WTC11 (cell line): ENCODE measurements at regions of chr21 and their contacts with region 1.

Region 1: DNA sequence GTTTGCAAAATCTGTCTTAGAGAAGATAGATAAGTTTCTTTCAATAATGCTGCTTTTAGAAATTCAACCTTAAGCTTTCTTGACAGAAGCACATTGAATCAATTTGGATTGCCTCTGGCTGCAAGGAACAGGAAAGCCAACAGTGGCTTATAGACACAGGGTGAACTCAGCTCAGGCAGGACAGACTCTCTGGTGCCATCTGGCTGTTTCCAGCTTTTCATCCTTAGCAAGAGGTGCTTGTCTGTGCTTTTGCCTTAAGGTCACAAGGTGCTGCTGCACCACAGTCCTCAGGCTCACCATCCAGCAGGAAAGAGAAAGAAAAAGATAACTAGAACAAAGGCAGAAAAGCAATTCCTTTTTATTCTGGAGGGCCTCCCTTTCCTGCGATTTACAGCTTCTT is 93.7 kb upstream of the ETS2 start:
- DNase-seq: peak; percentile 53
- ATAC-seq: peak; percentile 98
- H3K4me3 Mint-ChIP-seq: no peak overlapping the region
- H3K27ac Mint-ChIP-seq: no peak overlapping the region
- H3K4me1 Mint-ChIP-seq: peaks cover 10% of the 10 kb centered on the region
- H3K27me3 Mint-ChIP-seq: no peaks in the 10 kb centered on the region
- CTCF ChIP-seq: no peak

Region 2: DNA sequence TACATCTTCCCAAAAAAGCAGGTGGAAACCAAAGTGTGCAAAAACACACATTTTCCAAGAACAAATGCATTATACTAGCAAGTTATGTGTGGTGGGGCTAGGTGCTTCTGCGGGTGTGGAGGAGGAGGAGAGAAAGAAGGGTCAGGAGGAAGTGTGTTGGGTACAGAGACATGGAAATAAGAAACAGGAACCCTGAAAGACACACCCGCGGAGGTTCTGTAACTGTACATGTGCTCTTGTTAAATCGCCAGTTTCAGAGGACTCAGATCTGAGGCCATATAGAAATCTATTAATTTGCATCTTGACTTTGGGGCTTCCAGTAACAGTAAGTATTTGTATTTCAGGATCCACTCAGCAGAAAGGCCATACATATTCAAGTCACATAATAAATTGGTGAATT is 244.7 kb before region 1 on chr21:
- CTCF ChIA-PET with region 1: interaction called, 10 read pairs
- POLR2A ChIA-PET with region 1: no interaction called
- DNase-seq: no peak
- ATAC-seq: no peak
- H3K4me3 Mint-ChIP-seq: no peak overlapping the region
- H3K27ac Mint-ChIP-seq: no peak overlapping the region
- H3K4me1 Mint-ChIP-seq: peaks cover 30% of the 10 kb centered on the region
- H3K27me3 Mint-ChIP-seq: no peaks in the 10 kb centered on the region; the same call in 1 of the 2 replicates
- CTCF ChIP-seq: no peak

Region 3: DNA sequence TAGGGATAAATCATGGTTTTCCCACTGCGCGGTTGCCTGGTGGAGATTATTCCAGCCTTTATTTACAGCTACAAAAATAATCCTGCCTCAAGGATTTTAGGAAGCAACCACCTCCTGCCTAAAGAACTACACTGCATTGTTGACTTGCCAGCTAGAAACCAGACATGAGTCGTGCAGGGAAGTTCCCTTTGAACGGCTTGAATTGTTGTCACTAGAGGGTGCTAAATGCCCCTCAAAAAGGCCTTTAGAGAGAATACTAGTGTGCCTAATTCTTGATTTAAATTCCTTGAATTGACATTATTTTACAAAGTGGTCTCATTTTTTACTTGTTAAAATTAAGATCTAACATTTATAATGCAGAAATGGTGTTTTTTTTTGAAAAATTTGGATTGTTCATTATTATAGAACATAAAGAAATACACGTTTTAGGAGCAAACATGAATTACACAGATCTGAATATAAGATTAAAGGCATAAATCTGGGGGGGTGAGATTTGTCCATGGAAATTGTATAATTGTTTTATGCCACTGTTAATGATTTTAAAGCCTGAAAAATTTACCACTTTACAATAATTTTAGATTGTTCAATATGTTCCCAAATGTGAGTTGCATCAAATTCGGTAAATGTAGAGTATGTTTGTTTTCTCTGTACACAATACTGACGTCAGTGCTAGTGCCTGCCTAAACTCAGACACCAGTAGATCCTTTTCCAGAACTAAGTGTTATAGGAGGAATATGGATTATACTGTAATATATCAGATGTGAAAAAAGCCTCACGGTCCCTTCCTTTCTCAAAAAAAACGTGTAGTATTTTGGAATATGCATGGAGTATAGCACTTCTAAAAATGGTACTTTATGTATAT is 206.2 kb before region 1 on chr21:
- CTCF ChIA-PET with region 1: interaction called, 10 read pairs
- POLR2A ChIA-PET with region 1: no interaction called
- DNase-seq: no peak
- ATAC-seq: peak; percentile 79
- H3K4me3 Mint-ChIP-seq: no peak overlapping the region
- H3K27ac Mint-ChIP-seq: peak overlapping the region; percentile 72; the same call in 1 of the 2 replicates
- H3K4me1 Mint-ChIP-seq: peaks cover 46% of the 10 kb centered on the region
- H3K27me3 Mint-ChIP-seq: no peaks in the 10 kb centered on the region; the same call in 1 of the 2 replicates
- CTCF ChIP-seq: peak; percentile 29; the same call in 1 of the 2 replicates

Region 4: DNA sequence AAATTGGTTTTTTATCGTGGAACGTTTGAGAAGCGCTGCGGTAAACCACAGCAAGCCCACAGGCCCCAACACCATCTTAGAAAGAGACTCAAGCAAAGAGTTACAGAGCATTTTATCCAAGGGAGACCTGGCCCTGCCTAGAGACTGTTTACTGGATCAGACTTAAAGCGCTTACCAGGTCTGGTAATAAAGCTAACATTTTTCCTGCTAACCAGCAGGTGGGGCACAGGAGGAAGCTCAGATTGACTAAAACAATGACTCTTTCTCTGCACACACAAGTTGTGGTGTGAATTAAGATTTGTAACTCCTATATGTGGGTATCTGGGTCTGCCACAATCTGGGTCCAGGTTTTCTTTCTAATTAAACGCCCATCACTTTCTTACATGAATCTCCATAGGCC is 42.9 kb before region 1 on chr21:
- CTCF ChIA-PET with region 1: interaction called, 11 read pairs
- POLR2A ChIA-PET with region 1: no interaction called
- DNase-seq: no peak
- ATAC-seq: peak; percentile 77
- H3K4me3 Mint-ChIP-seq: no peak overlapping the region
- H3K27ac Mint-ChIP-seq: no peak overlapping the region
- H3K4me1 Mint-ChIP-seq: peaks cover 10% of the 10 kb centered on the region
- H3K27me3 Mint-ChIP-seq: no peaks in the 10 kb centered on the region
- CTCF ChIP-seq: no peak

Region 5: DNA sequence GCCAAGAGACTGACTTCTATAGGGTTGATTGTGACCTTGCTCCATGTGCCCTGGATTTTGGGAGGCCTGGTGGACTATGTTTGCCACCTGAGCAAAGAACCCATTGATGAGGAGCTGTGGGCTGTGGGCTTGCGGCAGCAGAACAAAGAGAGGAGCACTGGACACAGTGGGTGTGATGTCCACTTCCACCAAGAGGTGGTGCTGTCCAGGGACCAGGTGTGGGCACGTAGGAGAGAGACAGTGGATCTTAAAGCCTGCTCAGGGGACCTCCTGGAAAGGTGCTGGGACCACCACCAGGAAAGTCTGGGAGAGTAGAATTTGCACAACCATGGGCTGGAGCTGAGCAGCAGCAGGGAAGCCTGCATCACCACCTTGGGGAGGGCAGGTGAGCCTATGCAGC is 13.0 kb before region 1 on chr21:
- CTCF ChIA-PET with region 1: interaction called, 12 read pairs
- POLR2A ChIA-PET with region 1: no interaction called
- DNase-seq: peak; percentile 59
- ATAC-seq: peak; percentile 78
- H3K4me3 Mint-ChIP-seq: no peak overlapping the region
- H3K27ac Mint-ChIP-seq: no peak overlapping the region
- H3K4me1 Mint-ChIP-seq: peaks cover 5% of the 10 kb centered on the region
- H3K27me3 Mint-ChIP-seq: no peaks in the 10 kb centered on the region; the same call in none of the 2 replicates
- CTCF ChIP-seq: peak; percentile 59

Region 6: GRCh38 chr21:38755681-38756371 is 43.8 kb after region 1 on chr21:
- CTCF ChIA-PET with region 1: no interaction called
- POLR2A ChIA-PET with region 1: no interaction called
- DNase-seq: no peak
- ATAC-seq: peak; percentile 69
- H3K4me3 Mint-ChIP-seq: no peak overlapping the region
- H3K27ac Mint-ChIP-seq: no peak overlapping the region
- H3K4me1 Mint-ChIP-seq: peaks cover 15% of the 10 kb centered on the region
- H3K27me3 Mint-ChIP-seq: peaks cover 8% of the 10 kb centered on the region; the same call in 1 of the 2 replicates
- CTCF ChIP-seq: no peak